ENCODE measurements at regions of chr14 and their contacts with region 1.

Region 1: DNA sequence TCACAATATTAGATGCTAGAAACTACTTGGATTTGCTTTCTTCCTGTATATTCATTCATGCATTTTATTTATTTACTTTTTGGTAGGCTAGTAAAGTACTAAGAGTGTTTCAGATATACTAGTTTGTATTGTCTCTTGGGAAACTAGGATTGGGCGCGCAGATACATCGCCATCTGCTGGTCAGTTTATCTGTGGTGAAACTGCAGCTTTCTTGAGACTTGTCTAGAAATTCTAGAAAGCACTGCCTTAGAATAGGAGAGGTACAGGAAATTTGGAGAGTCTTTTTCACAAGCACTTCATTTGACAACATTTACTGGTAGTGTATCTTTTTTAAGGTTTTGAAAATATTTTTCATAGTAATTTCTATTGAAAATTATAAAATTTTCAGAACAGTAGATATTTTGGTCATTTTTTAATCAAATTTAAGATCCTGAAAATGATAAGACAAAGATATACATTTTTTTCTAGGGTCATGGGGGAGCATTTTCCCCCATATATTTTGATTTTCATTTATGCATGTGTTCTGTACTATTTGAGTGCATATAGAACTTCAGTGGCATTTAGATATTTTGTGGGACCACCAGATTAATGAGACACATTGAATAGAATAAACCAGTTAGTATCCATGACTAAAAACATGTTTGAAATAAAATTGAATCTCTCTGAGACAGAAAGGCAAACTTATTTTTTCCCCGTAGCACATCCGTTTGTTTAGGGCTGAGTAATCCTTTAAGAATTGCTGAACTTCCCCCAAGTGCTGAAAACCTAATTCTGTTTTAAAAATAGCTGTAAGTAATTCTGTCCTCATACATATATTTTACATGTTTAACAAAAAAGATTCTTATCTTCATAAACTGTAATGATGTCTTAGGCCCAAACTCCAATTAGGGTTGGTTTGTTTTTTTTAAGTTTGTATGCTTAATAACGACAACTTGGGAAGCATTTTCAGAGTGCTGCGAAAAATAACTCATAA is 44.5 kb downstream of the SLC38A6 start:
- DNase-seq: peak; percentile 32 to 62
- ATAC-seq: peak; percentile 84 to 87
- H3K4me3 ChIP-seq: no peak overlapping the region
- H3K27ac ChIP-seq: no peak overlapping the region
- H3K4me1 ChIP-seq: peaks cover 10 to 12% of the 10 kb centered on the region in 2 donors
- H3K27me3 ChIP-seq: no peaks in the 10 kb centered on the region
- CTCF ChIP-seq: peak; percentile 72 to 90 (median 87)
- POLR2A ChIP-seq: no peak

Region 2: DNA sequence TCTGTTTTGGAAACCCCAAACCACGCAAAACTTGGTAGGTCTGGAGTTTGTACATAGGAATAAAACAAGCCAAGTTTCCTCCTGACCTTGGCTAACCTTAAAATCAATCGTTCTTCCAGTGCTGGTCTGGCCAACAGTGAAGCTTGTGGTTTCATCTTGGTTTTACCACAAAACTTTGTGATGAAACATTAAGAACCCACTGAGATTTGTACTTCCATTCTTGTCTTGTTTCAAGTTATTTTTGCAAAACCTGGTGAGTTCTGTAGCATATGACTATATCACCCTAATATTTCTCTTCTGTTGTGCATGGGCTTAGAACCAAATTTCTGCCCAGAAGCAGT is 402.6 kb before region 1 on chr14:
- in situ Hi-C with region 1: loop called (anchors 5 to 10 kb)
- intact Hi-C with region 1: loop called (anchors 1 kb)
- DNase-seq: no peak
- ATAC-seq: no peak
- H3K4me3 ChIP-seq: no peak overlapping the region
- H3K27ac ChIP-seq: peak overlapping the region in 2 of 4 donors; percentile 35 to 48
- H3K4me1 ChIP-seq: peaks cover 15 to 19% of the 10 kb centered on the region in 2 donors
- H3K27me3 ChIP-seq: no peaks in the 10 kb centered on the region
- CTCF ChIP-seq: no peak
- POLR2A ChIP-seq: no peak

Region 3: GRCh38 chr14:60628892-60629291 is 396.6 kb before region 1 on chr14:
- in situ Hi-C with region 1: loop called (anchors 5 to 10 kb)
- intact Hi-C with region 1: loop called (anchors 1 kb)
- DNase-seq: no peak
- ATAC-seq: no peak
- H3K4me3 ChIP-seq: no peak overlapping the region
- H3K27ac ChIP-seq: peak overlapping the region in 1 of 4 donors; percentile 10
- H3K4me1 ChIP-seq: peaks cover 0 to 5% of the 10 kb centered on the region in 2 donors
- H3K27me3 ChIP-seq: no peaks in the 10 kb centered on the region
- CTCF ChIP-seq: no peak
- POLR2A ChIP-seq: no peak

Region 4: DNA sequence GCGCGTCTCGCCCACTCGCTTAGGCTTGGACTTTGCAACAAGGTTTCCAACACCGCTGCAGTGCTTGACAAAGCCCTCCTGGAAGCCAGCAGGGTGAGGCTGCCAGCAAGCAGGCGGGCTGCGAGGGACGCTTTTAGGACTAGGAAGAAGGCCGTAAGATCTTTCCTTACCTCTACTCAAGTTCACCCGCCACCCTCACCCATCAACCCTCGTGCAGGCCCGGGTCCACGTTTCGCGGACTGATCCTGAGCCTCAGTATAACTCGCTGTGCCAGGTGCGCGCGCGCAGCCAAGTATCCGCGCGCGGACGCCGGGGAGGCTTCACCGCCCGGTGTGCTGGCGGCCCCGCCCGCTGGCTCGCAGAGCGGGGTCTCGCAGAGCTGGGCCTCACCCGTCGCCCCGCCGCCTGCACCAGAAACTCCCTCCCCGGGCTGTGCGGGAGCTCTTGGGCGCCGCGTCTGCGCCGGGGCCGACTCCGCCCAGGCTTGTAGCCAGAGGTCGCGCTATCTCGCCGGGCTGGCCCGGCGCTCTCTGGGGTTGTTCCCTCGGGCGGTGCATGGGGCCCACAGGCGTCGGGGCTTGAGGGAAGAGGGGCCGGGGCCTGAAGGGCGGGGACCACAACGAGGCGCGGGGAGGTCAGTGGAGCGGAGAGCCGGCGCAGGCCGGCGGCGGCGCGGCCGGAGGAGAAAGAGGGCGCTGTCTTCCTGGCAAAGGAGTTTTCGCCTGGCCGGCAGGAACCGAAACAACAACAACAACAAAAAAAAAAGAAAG is 368.7 kb before region 1 on chr14:
- in situ Hi-C with region 1: no loop called
- intact Hi-C with region 1: loop called (anchors 1 kb)
- DNase-seq: peak; percentile 67 to 88
- ATAC-seq: peak; percentile 58 to 59
- H3K4me3 ChIP-seq: peak overlapping the region; percentile 73 to 90 (median 84)
- H3K27ac ChIP-seq: peak overlapping the region; percentile 93 to 98 (median 95)
- H3K4me1 ChIP-seq: peaks cover 26 to 34% of the 10 kb centered on the region in 2 donors
- H3K27me3 ChIP-seq: no peaks in the 10 kb centered on the region
- CTCF ChIP-seq: peak in 4 of 5 experiments; percentile 20 to 70 (median 49)
- POLR2A ChIP-seq: peak; percentile 33 to 50

Region 5: DNA sequence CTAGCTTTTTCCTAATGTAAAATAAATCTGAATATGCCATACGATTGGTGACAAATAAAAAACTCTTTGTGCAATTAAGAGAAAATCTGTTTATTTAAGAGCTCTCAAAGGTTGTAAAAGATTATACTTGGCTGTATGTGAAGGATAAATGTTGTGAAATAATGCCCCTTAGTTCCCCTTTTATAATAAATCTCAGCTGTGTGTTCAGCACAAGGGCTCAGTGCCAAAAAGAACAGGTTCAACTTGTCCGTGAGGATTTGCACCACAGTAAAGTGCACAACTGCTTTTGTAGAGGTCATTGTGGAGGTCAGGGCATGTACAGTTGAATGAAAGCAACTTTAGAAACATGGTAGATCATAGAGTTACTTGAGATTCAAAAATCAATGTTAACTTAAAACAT is 163.3 kb before region 1 on chr14:
- in situ Hi-C with region 1: no loop called
- intact Hi-C with region 1: no loop called
- DNase-seq: peak; percentile 66 to 72
- ATAC-seq: peak; percentile 79 to 92
- H3K4me3 ChIP-seq: no peak overlapping the region
- H3K27ac ChIP-seq: peak overlapping the region; percentile 76 to 87 (median 84)
- H3K4me1 ChIP-seq: peaks cover 54 to 60% of the 10 kb centered on the region in 2 donors
- H3K27me3 ChIP-seq: no peaks in the 10 kb centered on the region
- CTCF ChIP-seq: no peak
- POLR2A ChIP-seq: no peak

Region 6: DNA sequence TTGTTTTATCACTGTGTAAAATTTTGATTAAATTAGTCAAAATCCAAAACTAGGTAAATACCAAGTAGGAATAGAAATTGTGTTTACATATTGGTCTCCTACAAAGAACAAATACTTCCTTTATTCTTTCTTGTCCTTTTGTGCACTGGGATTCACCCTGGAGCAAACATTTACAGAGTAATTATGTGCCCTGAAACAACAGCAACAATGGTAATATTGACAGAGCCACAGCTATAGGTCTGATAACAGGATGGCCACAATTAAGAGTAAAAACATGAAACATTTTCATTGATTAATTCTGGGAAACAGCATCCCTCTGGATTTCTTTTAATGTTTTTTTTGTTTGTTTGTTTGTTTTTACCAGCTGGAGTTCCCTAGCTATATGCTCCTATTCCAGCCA is 16.7 kb after region 1 on chr14:
- in situ Hi-C with region 1: no loop called
- intact Hi-C with region 1: no loop called
- DNase-seq: no peak
- ATAC-seq: no peak
- H3K4me3 ChIP-seq: no peak overlapping the region
- H3K27ac ChIP-seq: no peak overlapping the region
- H3K4me1 ChIP-seq: no peaks in the 10 kb centered on the region
- H3K27me3 ChIP-seq: no peaks in the 10 kb centered on the region
- CTCF ChIP-seq: no peak
- POLR2A ChIP-seq: no peak

Region 7: GRCh38 chr14:61258985-61259384 is 233.4 kb after region 1 on chr14:
- in situ Hi-C with region 1: loop called in 2 of 4 experiments (anchors 5 to 10 kb)
- intact Hi-C with region 1: no loop called
- DNase-seq: no peak
- ATAC-seq: no peak
- H3K4me3 ChIP-seq: no peak overlapping the region
- H3K27ac ChIP-seq: peak overlapping the region; percentile 80 to 85 (median 84)
- H3K4me1 ChIP-seq: peaks cover 10 to 32% of the 10 kb centered on the region in 2 donors
- H3K27me3 ChIP-seq: no peaks in the 10 kb centered on the region
- CTCF ChIP-seq: no peak
- POLR2A ChIP-seq: no peak

Measured in gastrocnemius medialis (tissue), 4 donors.